Common myeloid progenitor, CD34-positive (primary cell): ENCODE measurements at regions of chr19 and their contacts with region 1.

Region 1: GRCh38 chr19:45485305-45486077 is 11.4 kb downstream of the RTN2 start:
- DNase-seq: peak; percentile 94 to 96 (median 94)
- H3K4me3 ChIP-seq: peak overlapping the region; percentile 41 to 86 (median 71)
- H3K27ac ChIP-seq: peak overlapping the region in 1 of 2 experiments; percentile 76
- H3K4me1 ChIP-seq: peaks cover 0 to 8% (median 6%) of the 10 kb centered on the region in 4 experiments
- H3K27me3 ChIP-seq: no peaks in the 10 kb centered on the region

Region 2: GRCh38 chr19:45439569-45440254 is 45.8 kb before region 1 on chr19:
- CTCF ChIA-PET with region 1: interaction called, 289 read pairs
- POLR2A ChIA-PET with region 1: interaction called, 3 read pairs
- DNase-seq: peak; percentile 75 to 87 (median 86)
- H3K4me3 ChIP-seq: peak overlapping the region; percentile 50 to 77 (median 66)
- H3K27ac ChIP-seq: peak overlapping the region in 1 of 2 experiments; percentile 43
- H3K4me1 ChIP-seq: peaks cover 0 to 33% (median 26%) of the 10 kb centered on the region in 4 experiments
- H3K27me3 ChIP-seq: peaks cover 0 to 12% (median 0%) of the 10 kb centered on the region in 5 experiments

Region 3: GRCh38 chr19:45496349-45496953 is 11.0 kb after region 1 on chr19:
- CTCF ChIA-PET with region 1: interaction called, 17 read pairs
- POLR2A ChIA-PET with region 1: no interaction called
- DNase-seq: peak in 2 of 3 donors; percentile 51 to 62
- H3K4me3 ChIP-seq: peak overlapping the region; percentile 23 to 80 (median 62)
- H3K27ac ChIP-seq: no peak overlapping the region
- H3K4me1 ChIP-seq: peaks cover 0 to 47% (median 39%) of the 10 kb centered on the region in 4 experiments
- H3K27me3 ChIP-seq: peaks cover 0 to 46% (median 24%) of the 10 kb centered on the region in 5 experiments